IMR-90 (cell line): ENCODE measurements at regions of chr6 and their contacts with region 1.

Region 1: DNA sequence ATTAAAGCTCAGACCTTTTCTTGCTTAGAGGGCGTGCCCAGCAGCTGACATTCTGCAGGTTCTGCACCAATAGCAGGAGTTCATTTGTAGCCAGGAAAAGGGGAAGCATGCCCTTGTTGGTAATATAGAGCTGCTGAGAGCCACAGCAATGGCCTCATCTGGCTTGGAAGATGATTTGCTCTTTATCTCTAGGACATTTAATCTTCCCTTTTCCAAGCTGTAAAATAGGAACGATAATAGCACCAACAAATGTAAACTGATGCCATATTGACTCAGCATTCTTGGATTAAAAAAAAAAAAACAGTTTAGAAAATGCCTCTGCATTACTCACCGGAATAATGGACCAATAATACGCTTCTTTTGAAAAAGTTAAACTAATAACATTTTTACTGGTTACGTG is 93.4 kb upstream of the SLC2A12 start:
- DNase-seq: peak; percentile 75
- ATAC-seq: peak; percentile 89
- H3K4me3 ChIP-seq: no peak overlapping the region
- H3K27ac ChIP-seq: peak overlapping the region; percentile 36; the same call in 1 of the 2 replicates
- H3K4me1 ChIP-seq: peaks cover 4% of the 10 kb centered on the region
- H3K27me3 ChIP-seq: no peaks in the 10 kb centered on the region
- CTCF ChIP-seq: no peak
- POLR2A ChIP-seq: no peak
- RAD21 ChIP-seq: no peak

Region 2: GRCh38 chr6:133945158-133945557 is 200.6 kb before region 1 on chr6:
- CTCF ChIA-PET with region 1: no interaction called
- POLR2A ChIA-PET with region 1: interaction called, 12 read pairs
- dilution Hi-C with region 1: no loop called
- in situ Hi-C with region 1: no loop called
- intact Hi-C with region 1: no loop called
- DNase-seq: peak; percentile 29
- ATAC-seq: peak; percentile 37
- H3K4me3 ChIP-seq: no peak overlapping the region
- H3K27ac ChIP-seq: no peak overlapping the region
- H3K4me1 ChIP-seq: no peaks in the 10 kb centered on the region
- H3K27me3 ChIP-seq: no peaks in the 10 kb centered on the region
- CTCF ChIP-seq: no peak
- POLR2A ChIP-seq: no peak
- RAD21 ChIP-seq: no peak

Region 3: GRCh38 chr6:134123666-134124208 is 22.0 kb before region 1 on chr6:
- CTCF ChIA-PET with region 1: interaction called, 10 read pairs
- POLR2A ChIA-PET with region 1: no interaction called
- dilution Hi-C with region 1: no loop called
- in situ Hi-C with region 1: no loop called
- intact Hi-C with region 1: no loop called
- DNase-seq: peak; percentile 72
- ATAC-seq: peak; percentile 77
- H3K4me3 ChIP-seq: no peak overlapping the region
- H3K27ac ChIP-seq: no peak overlapping the region
- H3K4me1 ChIP-seq: no peaks in the 10 kb centered on the region; the same call in 1 of the 2 replicates
- H3K27me3 ChIP-seq: no peaks in the 10 kb centered on the region
- CTCF ChIP-seq: peak; percentile 64
- POLR2A ChIP-seq: no peak
- RAD21 ChIP-seq: peak; percentile 62

Region 4: GRCh38 chr6:135438907-135439535 is 1293.2 kb after region 1 on chr6:
- CTCF ChIA-PET with region 1: no interaction called
- POLR2A ChIA-PET with region 1: no interaction called
- dilution Hi-C with region 1: no loop called
- in situ Hi-C with region 1: loop called (anchors 25 kb)
- intact Hi-C with region 1: no loop called
- DNase-seq: peak; percentile 58
- ATAC-seq: peak; percentile 62
- H3K4me3 ChIP-seq: no peak overlapping the region
- H3K27ac ChIP-seq: no peak overlapping the region
- H3K4me1 ChIP-seq: no peaks in the 10 kb centered on the region
- H3K27me3 ChIP-seq: no peaks in the 10 kb centered on the region
- CTCF ChIP-seq: peak; percentile 55
- POLR2A ChIP-seq: no peak
- RAD21 ChIP-seq: peak; percentile 63